RWPE1 (cell line): ENCODE measurements at regions of chr1 and their contacts with region 1.

Region 1: GRCh38 chr1:221435504-221435904 is 306.4 kb downstream of the DUSP10 start:
- DNase-seq: peak; percentile 60
- H3K27ac ChIP-seq: no peak overlapping the region
- CTCF ChIP-seq: peak; percentile 94

Region 2: GRCh38 chr1:221263831-221264767 is 171.4 kb before region 1 on chr1:
- CTCF ChIA-PET with region 1: interaction called, 15 read pairs
- POLR2A ChIA-PET with region 1: no interaction called
- DNase-seq: peak; percentile 25
- H3K27ac ChIP-seq: no peak overlapping the region
- CTCF ChIP-seq: no peak

Region 3: GRCh38 chr1:221415626-221416025 is 19.9 kb before region 1 on chr1:
- CTCF ChIA-PET with region 1: interaction called, 13 read pairs
- POLR2A ChIA-PET with region 1: no interaction called
- DNase-seq: no peak
- H3K27ac ChIP-seq: no peak overlapping the region
- CTCF ChIP-seq: no peak